ENCODE measurements at regions of chr2 and their contacts with region 1.

Region 1: DNA sequence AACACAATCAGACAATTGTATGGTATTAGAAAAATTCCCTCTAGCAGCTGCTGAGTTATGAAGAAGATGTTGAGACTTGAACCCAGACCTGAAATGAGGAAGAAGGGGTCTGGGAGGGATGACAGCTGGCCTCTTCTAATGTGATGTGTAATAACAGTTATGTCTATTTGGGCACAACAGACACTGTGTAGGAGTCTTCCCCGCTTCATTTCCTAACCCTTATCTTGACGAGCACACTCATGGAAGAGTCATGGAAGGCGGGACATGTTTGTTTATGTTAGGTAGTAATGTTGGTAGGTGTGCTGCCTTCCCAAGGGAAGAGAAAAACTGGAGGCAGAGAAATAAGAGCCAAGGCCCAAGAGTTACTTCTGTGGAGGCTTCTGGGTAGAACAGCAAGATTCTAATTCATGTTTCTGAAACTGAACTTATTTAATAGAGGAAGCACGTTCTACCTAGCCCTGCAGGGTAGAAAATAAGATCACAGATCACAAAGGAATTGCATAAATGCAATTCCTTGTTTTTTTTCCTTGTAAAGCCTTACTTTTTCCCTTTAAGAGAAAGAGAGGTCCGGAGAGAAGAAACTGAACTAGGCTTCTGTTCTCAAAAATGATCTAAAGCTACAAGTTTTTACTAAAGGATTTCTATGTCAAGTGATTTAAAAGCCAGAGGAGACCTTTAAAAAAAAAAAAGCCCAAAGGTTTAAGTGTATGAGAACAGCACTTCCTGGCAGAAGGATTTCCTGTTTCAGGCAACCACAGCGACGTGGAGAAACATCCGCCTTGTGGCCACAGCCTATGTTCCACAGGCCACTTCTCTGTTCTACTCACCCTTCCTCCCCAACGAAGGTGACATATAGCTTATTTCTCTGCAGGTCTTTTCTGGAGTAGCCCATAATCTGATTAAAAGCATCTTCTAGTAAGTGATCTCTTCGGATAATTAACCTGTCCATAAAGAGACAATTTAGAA is 68.5 kb upstream of the STK17B start:
- DNase-seq: peak; percentile 67
- ATAC-seq: peak; percentile 61
- H3K4me3 Mint-ChIP-seq: peak overlapping the region; percentile 41
- H3K27ac Mint-ChIP-seq: peak overlapping the region; percentile 100
- H3K4me1 Mint-ChIP-seq: peaks cover 89% of the 10 kb centered on the region
- H3K27me3 Mint-ChIP-seq: no peaks in the 10 kb centered on the region
- CTCF ChIP-seq: no peak

Region 2: DNA sequence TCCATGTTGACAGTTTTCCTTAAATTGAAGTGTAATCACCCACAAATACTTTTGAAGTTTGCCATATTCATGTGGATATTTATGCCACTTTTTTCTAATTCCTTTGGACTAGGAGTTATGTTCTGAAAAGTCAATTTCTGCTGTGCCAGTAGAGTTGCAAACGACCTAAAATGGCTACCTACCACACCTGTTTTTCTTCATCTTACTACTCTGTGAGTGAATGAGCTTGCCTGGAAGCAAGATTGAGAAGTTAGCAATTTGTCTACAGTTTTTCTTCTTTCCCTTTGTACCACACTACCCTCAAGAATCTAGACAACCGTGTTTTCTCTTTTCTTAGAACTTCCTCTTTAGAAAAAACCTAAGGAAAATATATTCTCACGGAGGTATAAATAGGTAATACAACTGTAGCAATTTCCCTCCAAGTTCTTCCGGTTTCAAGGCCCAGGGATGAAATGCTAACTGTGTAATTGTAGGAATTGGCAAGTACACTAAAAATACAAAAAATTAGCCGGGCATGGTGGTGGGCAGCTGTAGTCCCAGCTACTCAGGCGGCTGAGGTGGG is 590.2 kb before region 1 on chr2:
- CTCF ChIA-PET with region 1: no interaction called
- POLR2A ChIA-PET with region 1: no interaction called
- intact Hi-C with region 1: loop called (anchors 2 kb)
- DNase-seq: no peak
- ATAC-seq: peak; percentile 21
- H3K4me3 Mint-ChIP-seq: peak overlapping the region; percentile 76
- H3K27ac Mint-ChIP-seq: peak overlapping the region; percentile 99
- H3K4me1 Mint-ChIP-seq: peaks cover 76% of the 10 kb centered on the region
- H3K27me3 Mint-ChIP-seq: no peaks in the 10 kb centered on the region
- CTCF ChIP-seq: no peak

Region 3: DNA sequence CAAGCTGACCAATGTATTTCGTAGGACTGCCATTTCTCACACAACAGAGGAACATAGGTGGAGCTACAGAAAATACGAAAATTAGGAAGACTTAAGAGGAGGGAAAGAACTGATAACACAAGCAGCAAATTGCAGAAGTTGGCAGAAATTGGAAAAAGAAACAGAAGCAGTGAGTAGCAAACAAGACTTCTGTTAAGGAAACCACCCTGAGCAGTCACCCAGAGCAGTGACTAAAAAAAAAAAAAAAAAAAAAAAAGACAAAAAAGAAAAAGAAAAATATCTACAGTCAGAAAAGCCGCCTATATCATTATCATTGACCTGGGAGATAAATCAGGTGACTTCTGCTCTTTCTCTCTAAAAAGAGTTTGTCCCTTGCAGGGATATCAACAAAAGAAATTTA is 90.0 kb before region 1 on chr2:
- CTCF ChIA-PET with region 1: no interaction called
- POLR2A ChIA-PET with region 1: interaction called, 7 read pairs
- intact Hi-C with region 1: loop called (anchors 1 kb)
- DNase-seq: no peak
- ATAC-seq: peak; percentile 71
- H3K4me3 Mint-ChIP-seq: peak overlapping the region; percentile 70
- H3K27ac Mint-ChIP-seq: peak overlapping the region; percentile 93
- H3K4me1 Mint-ChIP-seq: peaks cover 78% of the 10 kb centered on the region
- H3K27me3 Mint-ChIP-seq: no peaks in the 10 kb centered on the region
- CTCF ChIP-seq: no peak

Region 4: DNA sequence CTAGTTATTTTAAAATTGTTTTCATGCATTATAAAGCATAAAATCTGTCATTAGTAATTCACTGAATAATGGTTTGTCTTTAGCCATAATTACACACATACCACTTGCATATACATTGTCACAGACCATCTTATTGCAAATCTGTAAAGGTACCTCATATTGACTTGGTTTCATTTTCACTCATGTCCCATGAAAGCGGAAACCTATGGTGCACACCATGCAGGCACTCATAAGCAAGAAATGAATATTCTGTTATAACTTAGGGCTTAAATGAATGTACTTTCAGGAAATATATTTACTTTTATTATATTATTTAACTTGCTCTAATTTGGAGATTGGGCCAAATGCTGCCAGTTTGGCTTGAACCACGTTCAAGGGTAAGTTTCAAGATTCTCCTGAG is 39.3 kb before region 1 on chr2:
- CTCF ChIA-PET with region 1: interaction called, 3 read pairs
- POLR2A ChIA-PET with region 1: interaction called, 8 read pairs
- intact Hi-C with region 1: loop called (anchors 1 kb)
- DNase-seq: no peak
- ATAC-seq: peak; percentile 82
- H3K4me3 Mint-ChIP-seq: peak overlapping the region; percentile 53
- H3K27ac Mint-ChIP-seq: peak overlapping the region; percentile 80
- H3K4me1 Mint-ChIP-seq: peaks cover 40% of the 10 kb centered on the region
- H3K27me3 Mint-ChIP-seq: no peaks in the 10 kb centered on the region
- CTCF ChIP-seq: no peak

Region 5: DNA sequence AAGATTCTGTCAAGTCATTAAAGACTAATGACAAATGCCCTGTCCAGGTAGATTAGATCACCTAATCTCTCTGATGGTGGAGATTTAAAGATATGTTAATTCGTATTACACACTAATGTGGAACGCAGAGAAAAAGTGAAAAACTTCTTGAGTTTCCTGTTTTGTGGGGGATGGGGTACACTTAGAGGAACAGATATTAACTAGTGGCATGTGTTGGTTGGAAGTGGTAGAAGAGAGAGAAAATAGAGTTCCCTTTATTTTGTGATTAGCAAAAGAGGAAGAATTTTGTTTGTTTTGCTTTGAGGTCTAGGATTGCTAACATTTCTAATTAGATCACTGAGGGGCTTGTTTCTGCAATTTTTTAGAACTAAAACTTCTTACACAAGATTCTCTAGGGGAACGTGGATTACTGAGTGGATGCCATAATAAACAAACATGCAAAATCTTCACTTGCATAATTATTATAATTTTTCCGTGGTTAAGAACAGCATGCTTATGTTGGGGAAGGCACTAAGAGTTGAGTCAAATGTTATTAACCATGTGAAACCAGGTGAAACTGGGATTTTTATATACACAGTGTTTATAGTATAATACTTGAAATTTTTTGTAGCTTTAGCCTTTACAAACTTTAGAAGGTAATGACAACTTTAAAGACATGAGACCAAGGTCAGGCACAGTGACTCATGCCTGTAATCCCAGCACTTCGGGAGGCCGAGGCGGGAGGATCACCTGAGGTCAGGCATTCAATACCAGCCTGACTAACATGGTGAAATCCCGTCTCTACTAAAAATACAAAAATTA is 28.8 kb after region 1 on chr2:
- CTCF ChIA-PET with region 1: interaction called, 6 read pairs
- POLR2A ChIA-PET with region 1: interaction called, 8 read pairs
- intact Hi-C with region 1: loop called (anchors 1 kb)
- DNase-seq: no peak
- ATAC-seq: peak; percentile 73
- H3K4me3 Mint-ChIP-seq: peak overlapping the region; percentile 67
- H3K27ac Mint-ChIP-seq: peak overlapping the region; percentile 88
- H3K4me1 Mint-ChIP-seq: peaks cover 64% of the 10 kb centered on the region
- H3K27me3 Mint-ChIP-seq: no peaks in the 10 kb centered on the region
- CTCF ChIP-seq: no peak

Region 6: DNA sequence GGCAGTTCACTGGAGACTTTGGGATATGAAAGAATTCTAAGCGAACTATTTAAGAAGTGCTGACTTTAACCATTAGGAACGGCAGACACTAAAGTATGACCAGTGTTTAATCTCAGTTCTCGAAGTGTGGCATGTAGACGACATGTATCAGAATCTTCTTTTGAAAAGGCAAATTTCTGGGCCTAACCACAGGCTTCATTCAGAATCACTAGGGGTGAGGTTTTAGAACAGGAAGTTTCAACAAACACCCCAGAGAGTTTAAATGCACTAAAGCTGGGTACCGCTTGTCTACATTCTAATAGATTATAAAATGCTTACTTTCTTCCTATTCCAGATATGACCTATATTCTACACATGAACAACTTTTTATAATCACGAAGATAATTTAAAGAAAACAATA is 890.4 kb after region 1 on chr2:
- CTCF ChIA-PET with region 1: no interaction called
- POLR2A ChIA-PET with region 1: no interaction called
- intact Hi-C with region 1: loop called (anchors 10 kb)
- DNase-seq: no peak
- ATAC-seq: peak; percentile 69
- H3K4me3 Mint-ChIP-seq: peak overlapping the region; percentile 82
- H3K27ac Mint-ChIP-seq: peak overlapping the region; percentile 98
- H3K4me1 Mint-ChIP-seq: peaks cover 71% of the 10 kb centered on the region
- H3K27me3 Mint-ChIP-seq: no peaks in the 10 kb centered on the region
- CTCF ChIP-seq: no peak